ENCODE measurements at regions of chr6 and their contacts with region 1.

Region 1: GRCh38 chr6:7238900-7239589 is 74.0 kb downstream of the SSR1 start:
- DNase-seq: peak; percentile 83 to 94 (median 91)
- ATAC-seq: peak; percentile 79 to 89 (median 88)
- H3K4me3 ChIP-seq: no peak overlapping the region
- H3K27ac ChIP-seq: peak overlapping the region in 6 of 12 donors; percentile 10 to 59 (median 46)
- H3K4me1 ChIP-seq: peaks cover 0 to 53% (median 29%) of the 10 kb centered on the region in 12 donors
- H3K27me3 ChIP-seq: no peaks in the 10 kb centered on the region
- CTCF ChIP-seq: peak in 11 of 12 donors; percentile 50 to 77 (median 70)
- POLR2A ChIP-seq: no peak

Region 2: DNA sequence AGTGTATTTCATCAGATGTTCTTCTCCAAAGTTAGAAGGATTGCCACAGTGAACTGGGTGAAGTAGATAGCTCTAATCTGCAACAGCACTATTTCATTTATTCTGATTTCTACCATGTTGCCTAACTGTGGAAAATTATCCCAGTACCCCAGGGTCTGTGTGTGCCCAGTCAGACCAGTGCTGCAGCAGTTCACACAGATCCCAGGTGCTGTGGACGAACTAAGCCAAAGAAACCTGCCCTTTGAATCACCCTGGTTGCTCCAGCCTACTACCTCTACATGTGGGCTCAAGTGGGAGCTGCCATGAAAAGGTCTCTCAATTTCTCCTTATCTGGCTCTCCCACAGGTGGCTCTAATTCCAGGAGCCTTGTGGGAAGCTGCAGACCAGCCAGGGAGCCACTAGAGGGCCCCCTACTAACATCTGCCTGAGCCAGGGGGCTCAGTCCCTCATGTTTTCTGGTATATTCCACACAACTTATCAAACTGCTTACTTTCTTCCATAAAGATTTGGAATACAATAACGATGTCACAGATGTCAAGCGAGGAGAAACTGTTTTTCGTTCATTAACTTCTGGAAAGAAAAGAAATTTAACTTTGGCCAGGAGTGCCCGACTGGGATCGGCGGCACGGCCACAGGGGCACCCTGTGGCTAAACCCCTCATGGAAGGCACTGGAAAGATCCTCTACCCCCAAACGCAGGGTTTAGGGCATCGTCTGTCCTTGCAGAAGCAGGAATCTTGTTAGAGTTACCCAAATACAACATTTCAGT is 682.1 kb before region 1 on chr6:
- intact Hi-C with region 1: loop called in 6 of 10 experiments (anchors 5 to 10 kb)
- DNase-seq: peak in 3 of 5 donors; percentile 43 to 52 (median 48)
- ATAC-seq: peak; percentile 36 to 81 (median 78)
- H3K4me3 ChIP-seq: no peak overlapping the region
- H3K27ac ChIP-seq: no peak overlapping the region
- H3K4me1 ChIP-seq: peaks cover 0 to 15% (median 0%) of the 10 kb centered on the region in 12 donors
- H3K27me3 ChIP-seq: no peaks in the 10 kb centered on the region
- CTCF ChIP-seq: peak; percentile 81 to 96 (median 88)
- POLR2A ChIP-seq: no peak

Region 3: GRCh38 chr6:6724539-6725467 is 514.2 kb before region 1 on chr6:
- intact Hi-C with region 1: loop called (anchors 2 to 10 kb)
- DNase-seq: peak; percentile 69 to 83 (median 72)
- ATAC-seq: peak; percentile 77 to 91 (median 86)
- H3K4me3 ChIP-seq: peak overlapping the region in 11 of 12 donors; percentile 22 to 51 (median 46)
- H3K27ac ChIP-seq: peak overlapping the region; percentile 62 to 96 (median 88)
- H3K4me1 ChIP-seq: peaks cover 2 to 55% (median 26%) of the 10 kb centered on the region in 12 donors
- H3K27me3 ChIP-seq: no peaks in the 10 kb centered on the region
- CTCF ChIP-seq: peak; percentile 43 to 85 (median 71)
- POLR2A ChIP-seq: no peak

Region 4: DNA sequence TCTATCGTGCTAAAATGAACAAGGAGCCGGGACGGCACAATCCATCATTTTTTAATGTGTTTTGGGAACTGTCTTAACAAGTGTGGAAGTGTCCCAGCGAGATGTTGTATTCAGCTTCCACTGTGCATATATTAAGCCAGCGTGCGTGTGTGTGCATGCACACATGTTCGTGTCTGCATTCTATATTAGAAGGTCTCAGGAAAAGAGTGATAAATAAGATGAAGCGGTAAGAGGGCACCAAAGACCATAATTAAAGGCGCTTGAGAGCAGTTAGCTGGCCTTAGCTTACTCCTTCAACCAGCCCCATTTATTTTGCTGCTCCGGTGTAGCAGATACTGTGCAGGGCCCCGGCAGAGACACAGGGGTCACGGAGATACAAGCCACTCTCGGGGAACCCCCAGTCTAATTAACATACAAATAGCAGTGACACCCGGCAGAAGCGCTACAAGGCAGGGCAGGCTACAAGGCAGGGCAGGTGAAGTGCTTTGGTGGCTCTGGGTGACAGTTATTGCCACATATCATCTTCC is 337.8 kb before region 1 on chr6:
- intact Hi-C with region 1: loop called in 3 of 10 experiments (anchors 5 to 10 kb)
- DNase-seq: no peak
- ATAC-seq: peak in 2 of 4 donors; percentile 43 to 48
- H3K4me3 ChIP-seq: no peak overlapping the region
- H3K27ac ChIP-seq: no peak overlapping the region
- H3K4me1 ChIP-seq: peaks cover 0 to 13% (median 0%) of the 10 kb centered on the region in 12 donors
- H3K27me3 ChIP-seq: no peaks in the 10 kb centered on the region
- CTCF ChIP-seq: peak in 1 of 12 donors; percentile 22
- POLR2A ChIP-seq: no peak

Region 5: DNA sequence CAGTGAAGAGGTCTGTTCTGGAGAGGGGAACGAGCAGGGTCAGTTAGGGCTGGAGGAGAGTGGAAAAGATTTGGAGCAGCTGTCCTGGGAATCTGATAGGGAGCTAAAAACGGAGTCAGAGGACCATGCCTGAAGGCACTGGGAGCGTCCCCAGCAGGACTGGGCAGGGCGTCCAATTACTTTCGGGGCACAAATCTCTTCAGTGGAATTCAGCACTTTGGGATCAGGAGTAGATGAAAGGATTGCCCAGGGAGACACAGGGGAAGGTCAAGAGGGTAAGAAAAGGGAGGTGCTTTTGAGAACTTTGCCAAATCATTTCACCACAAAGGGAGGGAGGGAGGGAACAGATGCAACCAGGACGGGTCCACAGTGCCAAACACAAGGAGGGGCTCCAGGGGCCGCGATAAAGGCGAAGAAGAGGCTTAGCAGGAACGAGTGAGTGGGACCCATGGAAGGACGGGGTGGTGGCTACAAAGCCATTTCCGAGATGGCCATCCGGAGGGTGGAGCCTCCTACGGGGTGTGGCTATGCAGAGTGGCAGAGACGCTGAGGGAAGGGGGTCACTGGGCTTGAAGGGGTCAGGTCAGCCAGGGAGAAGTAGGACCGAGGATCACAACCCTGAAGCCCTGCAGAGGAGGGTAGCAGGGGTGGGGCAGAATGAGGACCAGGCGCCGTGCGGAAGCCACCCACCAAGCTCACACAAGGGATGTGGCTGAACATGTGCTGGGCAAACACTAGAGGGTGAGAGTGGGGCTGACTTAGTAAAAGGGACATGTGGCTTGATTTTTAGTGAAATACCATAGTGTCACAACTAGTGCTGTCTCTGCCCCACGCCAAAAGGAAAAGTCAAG is 311.3 kb before region 1 on chr6:
- intact Hi-C with region 1: loop called in 2 of 10 experiments (anchors 10 kb)
- DNase-seq: peak; percentile 45 to 74 (median 48)
- ATAC-seq: peak; percentile 88 to 92 (median 90)
- H3K4me3 ChIP-seq: peak overlapping the region in 10 of 12 donors; percentile 18 to 53 (median 44)
- H3K27ac ChIP-seq: peak overlapping the region in 11 of 12 donors; percentile 61 to 86 (median 75)
- H3K4me1 ChIP-seq: peaks cover 0 to 28% (median 4%) of the 10 kb centered on the region in 12 donors
- H3K27me3 ChIP-seq: no peaks in the 10 kb centered on the region
- CTCF ChIP-seq: peak in 10 of 12 donors; percentile 6 to 43 (median 23)
- POLR2A ChIP-seq: no peak

Region 6: DNA sequence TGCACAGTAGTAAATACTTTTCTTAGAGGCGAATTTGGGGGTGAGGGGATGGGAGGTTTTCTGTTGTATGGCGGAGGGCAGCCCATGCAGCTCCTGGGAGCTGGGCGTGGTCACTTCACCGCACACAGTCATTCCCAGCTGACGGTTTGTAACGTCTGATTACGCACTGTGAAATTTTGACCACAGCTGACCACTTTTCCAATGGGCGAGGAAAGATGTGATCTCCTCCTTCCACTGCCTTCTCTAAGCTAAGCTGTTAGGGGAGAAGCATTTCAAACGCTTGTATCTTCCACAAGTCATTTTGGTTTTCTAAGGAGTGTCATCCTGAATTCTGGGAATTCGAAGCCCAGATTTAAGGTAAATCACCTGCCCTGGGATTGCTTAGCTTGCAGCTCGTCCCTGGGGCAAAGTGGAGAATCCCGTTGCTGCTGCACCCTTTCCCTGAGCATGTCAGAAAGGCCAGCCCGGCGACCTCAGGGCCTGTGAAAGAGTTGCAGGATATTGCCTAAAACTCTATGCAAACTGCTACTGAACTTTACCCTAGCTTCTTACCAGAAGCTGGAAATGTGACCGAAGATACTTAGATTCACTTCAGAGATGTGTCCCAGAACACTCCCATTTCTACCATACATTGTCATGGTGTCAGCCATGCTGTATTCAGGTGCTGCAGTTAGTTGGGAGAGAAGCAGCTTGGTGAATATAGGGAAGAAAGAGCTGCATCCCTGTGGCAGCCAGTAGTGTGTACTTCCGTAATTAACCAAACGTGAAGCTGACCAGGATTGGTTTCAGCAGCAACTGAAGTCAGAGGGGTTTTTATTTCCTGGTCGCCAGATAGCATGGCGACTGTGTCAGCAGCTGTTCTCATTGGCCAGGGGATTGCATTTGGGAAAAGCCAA is 72.4 kb before region 1 on chr6:
- intact Hi-C with region 1: no loop called
- DNase-seq: no peak
- ATAC-seq: no peak
- H3K4me3 ChIP-seq: no peak overlapping the region
- H3K27ac ChIP-seq: peak overlapping the region in 5 of 12 donors; percentile 0 to 68 (median 26)
- H3K4me1 ChIP-seq: peaks cover 19 to 100% (median 78%) of the 10 kb centered on the region in 12 donors
- H3K27me3 ChIP-seq: no peaks in the 10 kb centered on the region
- CTCF ChIP-seq: no peak
- POLR2A ChIP-seq: no peak

Region 7: GRCh38 chr6:7282097-7282906 is 43.3 kb after region 1 on chr6:
- intact Hi-C with region 1: no loop called
- DNase-seq: no peak
- ATAC-seq: no peak
- H3K4me3 ChIP-seq: no peak overlapping the region
- H3K27ac ChIP-seq: peak overlapping the region in 1 of 12 donors; percentile 9
- H3K4me1 ChIP-seq: peaks cover 0 to 20% (median 0%) of the 10 kb centered on the region in 12 donors
- H3K27me3 ChIP-seq: no peaks in the 10 kb centered on the region
- CTCF ChIP-seq: no peak
- POLR2A ChIP-seq: no peak

Region 8: DNA sequence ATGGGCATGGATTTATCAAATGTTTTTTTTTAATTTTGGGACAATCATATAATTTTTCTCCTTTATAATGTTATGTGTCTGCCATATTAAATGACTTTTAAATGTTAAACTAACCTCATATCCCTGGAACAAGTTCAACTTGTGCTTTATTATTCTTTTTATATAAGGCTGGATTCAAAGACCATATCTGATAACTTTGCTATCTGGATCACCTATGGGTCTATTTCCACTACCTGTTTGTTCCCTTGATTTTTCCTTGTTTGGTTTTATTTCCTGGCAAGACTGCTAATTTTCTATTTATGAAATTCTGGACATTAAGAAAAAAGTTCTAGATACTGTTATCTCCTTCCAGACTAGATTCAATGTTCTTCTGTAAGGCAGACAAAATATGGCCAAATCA is 612.7 kb after region 1 on chr6:
- intact Hi-C with region 1: no loop called
- DNase-seq: no peak
- ATAC-seq: no peak
- H3K4me3 ChIP-seq: no peak overlapping the region
- H3K27ac ChIP-seq: no peak overlapping the region
- H3K4me1 ChIP-seq: peaks cover 0 to 6% (median 0%) of the 10 kb centered on the region in 12 donors
- H3K27me3 ChIP-seq: no peaks in the 10 kb centered on the region
- CTCF ChIP-seq: no peak
- POLR2A ChIP-seq: no peak